ENCODE measurements at regions of chr7 and their contacts with region 1.

Region 1: GRCh38 chr7:27196287-27196767 is 3.6 kb downstream of the HOXA13 start:
- DNase-seq: peak; percentile 89
- ATAC-seq: no peak
- H3K4me3 ChIP-seq: peak overlapping the region; percentile 91
- H3K27ac ChIP-seq: peak overlapping the region; percentile 21; the same call in 1 of the 2 replicates
- H3K4me1 ChIP-seq: peaks cover 14% of the 10 kb centered on the region
- H3K27me3 ChIP-seq: no peaks in the 10 kb centered on the region
- CTCF ChIP-seq: peak; percentile 91

Region 2: DNA sequence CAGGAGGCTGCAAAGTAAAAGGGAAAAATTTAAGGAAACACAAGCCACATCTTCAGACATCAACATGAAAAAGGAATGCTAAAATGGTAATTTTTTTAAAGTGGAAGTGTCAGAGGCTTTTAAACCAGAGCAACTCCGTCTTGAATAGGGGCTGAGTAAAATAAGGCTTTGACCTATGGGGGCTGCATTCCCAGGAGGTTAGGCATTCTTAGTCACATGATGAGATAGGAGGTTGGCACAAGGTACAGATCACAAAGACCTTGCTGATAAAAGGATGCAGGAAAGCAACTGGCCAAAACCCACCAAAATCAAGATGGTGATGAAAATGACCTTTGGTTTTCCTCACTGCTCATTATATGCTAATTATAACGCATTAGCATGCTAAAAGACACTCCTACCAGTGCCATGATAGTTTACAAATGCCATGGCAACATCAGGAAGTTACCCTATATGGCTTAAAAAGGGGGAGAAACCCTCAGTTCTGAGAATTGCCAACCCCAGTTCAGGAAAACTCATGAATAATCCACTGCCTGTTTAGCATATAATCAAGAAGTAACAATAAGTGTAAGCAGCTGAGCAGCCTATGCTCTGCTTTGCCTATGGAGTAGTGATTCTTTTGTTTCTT is 460.2 kb before region 1 on chr7:
- CTCF ChIA-PET with region 1: no interaction called
- POLR2A ChIA-PET with region 1: no interaction called
- intact Hi-C with region 1: no loop called
- DNase-seq: no peak
- ATAC-seq: no peak
- H3K4me3 ChIP-seq: no peak overlapping the region
- H3K27ac ChIP-seq: no peak overlapping the region
- H3K4me1 ChIP-seq: no peaks in the 10 kb centered on the region
- H3K27me3 ChIP-seq: no peaks in the 10 kb centered on the region
- CTCF ChIP-seq: no peak

Region 3: DNA sequence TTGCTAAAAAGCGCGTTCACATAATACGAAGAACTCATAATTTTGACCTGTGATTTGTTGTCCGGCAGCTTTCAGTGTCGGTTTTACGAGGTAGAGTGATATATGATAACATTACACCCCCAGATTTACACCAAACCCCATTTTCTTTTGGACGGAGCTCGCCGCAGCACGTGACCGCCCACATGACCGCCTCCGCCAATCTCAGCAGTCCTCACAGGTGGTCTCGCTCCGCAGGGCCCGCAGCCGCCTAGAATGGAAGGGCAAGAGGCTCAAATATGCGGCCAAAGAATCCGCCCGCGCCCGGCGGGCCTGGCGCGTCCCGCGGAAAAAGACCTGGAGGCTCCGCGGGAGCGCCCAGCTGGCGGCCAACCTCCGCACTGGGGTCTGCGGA is 39.8 kb before region 1 on chr7 and contains the start of gene HOXA7:
- CTCF ChIA-PET with region 1: no interaction called
- POLR2A ChIA-PET with region 1: no interaction called
- intact Hi-C with region 1: no loop called
- DNase-seq: no peak
- ATAC-seq: no peak
- H3K4me3 ChIP-seq: peak within 1 kb of the TSS; percentile 79
- H3K27ac ChIP-seq: no peak within 1 kb of the TSS
- H3K4me1 ChIP-seq: peaks cover 28% of the 10 kb centered on the region
- H3K27me3 ChIP-seq: no peaks in the 10 kb centered on the region
- CTCF ChIP-seq: no peak
- total RNA-seq, gene HOXA7: 2.6 and 2.8 TPM in 2 replicates

Region 4: GRCh38 chr7:27576360-27576944 is 380.1 kb after region 1 on chr7:
- CTCF ChIA-PET with region 1: interaction called, 4 read pairs
- POLR2A ChIA-PET with region 1: interaction called, 9 read pairs
- intact Hi-C with region 1: loop called (anchors 2 kb)
- DNase-seq: peak; percentile 79
- ATAC-seq: peak; percentile 56
- H3K4me3 ChIP-seq: no peak overlapping the region
- H3K27ac ChIP-seq: no peak overlapping the region
- H3K4me1 ChIP-seq: peaks cover 11% of the 10 kb centered on the region
- H3K27me3 ChIP-seq: no peaks in the 10 kb centered on the region
- CTCF ChIP-seq: peak; percentile 80

Region 5: GRCh38 chr7:27677912-27678612 is 481.7 kb after region 1 on chr7:
- CTCF ChIA-PET with region 1: no interaction called
- POLR2A ChIA-PET with region 1: no interaction called
- intact Hi-C with region 1: loop called (anchors 1 kb)
- DNase-seq: peak; percentile 95
- ATAC-seq: peak; percentile 96
- H3K4me3 ChIP-seq: peak overlapping the region; percentile 34; the same call in 1 of the 2 replicates
- H3K27ac ChIP-seq: peak overlapping the region; percentile 100
- H3K4me1 ChIP-seq: peaks cover 31% of the 10 kb centered on the region
- H3K27me3 ChIP-seq: no peaks in the 10 kb centered on the region
- CTCF ChIP-seq: no peak

Region 6: GRCh38 chr7:27774717-27775328 is 578.5 kb after region 1 on chr7:
- CTCF ChIA-PET with region 1: interaction called, 5 read pairs
- POLR2A ChIA-PET with region 1: no interaction called
- intact Hi-C with region 1: loop called (anchors 2 kb)
- DNase-seq: peak; percentile 70
- ATAC-seq: peak; percentile 58; the same call in 1 of the 2 replicates
- H3K4me3 ChIP-seq: no peak overlapping the region
- H3K27ac ChIP-seq: no peak overlapping the region
- H3K4me1 ChIP-seq: peaks cover 38% of the 10 kb centered on the region
- H3K27me3 ChIP-seq: no peaks in the 10 kb centered on the region
- CTCF ChIP-seq: peak; percentile 91

Region 7: GRCh38 chr7:28096713-28097112 is 900.4 kb after region 1 on chr7:
- CTCF ChIA-PET with region 1: no interaction called
- POLR2A ChIA-PET with region 1: no interaction called
- intact Hi-C with region 1: loop called (anchors 5 kb)
- DNase-seq: peak; percentile 71
- ATAC-seq: peak; percentile 66
- H3K4me3 ChIP-seq: no peak overlapping the region
- H3K27ac ChIP-seq: no peak overlapping the region
- H3K4me1 ChIP-seq: no peaks in the 10 kb centered on the region
- H3K27me3 ChIP-seq: no peaks in the 10 kb centered on the region
- CTCF ChIP-seq: peak; percentile 88

Measured in PC-3 (cell line).